ENCODE measurements at regions of chr6 and their contacts with region 1.

Region 1: DNA sequence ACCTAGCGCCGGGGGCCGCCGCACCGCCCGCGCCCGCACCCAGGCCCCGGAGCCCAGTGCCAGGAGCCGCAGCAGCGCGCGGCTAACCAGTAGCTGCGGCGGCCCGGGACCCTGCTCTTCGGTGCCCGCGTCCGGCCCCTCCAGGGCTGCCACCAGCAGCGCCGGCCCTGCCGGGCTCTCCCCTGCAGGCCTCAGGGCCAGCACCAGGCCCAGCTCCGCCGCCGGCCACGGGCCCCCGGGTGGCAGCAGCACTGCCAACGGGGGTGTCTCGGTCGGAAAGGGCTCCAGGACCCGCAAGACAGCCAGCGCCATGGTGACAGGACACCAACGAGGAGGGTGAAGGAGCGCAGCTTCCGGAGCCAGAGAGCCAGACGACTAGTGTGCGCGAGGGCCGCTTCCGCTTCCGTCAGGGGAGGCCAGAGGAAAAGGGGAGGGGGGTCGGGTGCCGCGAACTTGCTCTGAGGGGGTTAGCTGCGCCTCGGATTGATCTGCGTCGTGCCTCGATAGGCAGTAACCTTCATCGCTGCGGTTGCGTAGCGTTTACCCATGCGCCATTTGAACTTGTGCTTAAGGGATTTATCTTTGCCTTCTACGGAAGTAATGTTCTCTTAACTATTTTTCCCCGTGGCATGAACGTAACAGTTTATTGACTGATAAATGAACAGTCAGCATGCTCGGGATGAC is at the start of gene PEX6:
- DNase-seq: peak; percentile 87 to 98 (median 92)
- H3K4me3 ChIP-seq: peak within 1 kb of the TSS; percentile 70 to 75
- H3K4me3 Mint-ChIP-seq: peak within 1 kb of the TSS; percentile 92 to 99 (median 96)
- H3K27ac ChIP-seq: peak within 1 kb of the TSS; percentile 77
- H3K27ac Mint-ChIP-seq: peak within 1 kb of the TSS; percentile 93 to 99 (median 98)
- H3K4me1 ChIP-seq: peaks cover 56% of the 10 kb centered on the region
- H3K4me1 Mint-ChIP-seq: peaks cover 30 to 63% (median 43%) of the 10 kb centered on the region in 4 donors
- H3K27me3 ChIP-seq: no peaks in the 10 kb centered on the region
- H3K27me3 Mint-ChIP-seq: no peaks in the 10 kb centered on the region
- total RNA-seq, gene PEX6: 38.9 to 40.5 TPM

Region 2: DNA sequence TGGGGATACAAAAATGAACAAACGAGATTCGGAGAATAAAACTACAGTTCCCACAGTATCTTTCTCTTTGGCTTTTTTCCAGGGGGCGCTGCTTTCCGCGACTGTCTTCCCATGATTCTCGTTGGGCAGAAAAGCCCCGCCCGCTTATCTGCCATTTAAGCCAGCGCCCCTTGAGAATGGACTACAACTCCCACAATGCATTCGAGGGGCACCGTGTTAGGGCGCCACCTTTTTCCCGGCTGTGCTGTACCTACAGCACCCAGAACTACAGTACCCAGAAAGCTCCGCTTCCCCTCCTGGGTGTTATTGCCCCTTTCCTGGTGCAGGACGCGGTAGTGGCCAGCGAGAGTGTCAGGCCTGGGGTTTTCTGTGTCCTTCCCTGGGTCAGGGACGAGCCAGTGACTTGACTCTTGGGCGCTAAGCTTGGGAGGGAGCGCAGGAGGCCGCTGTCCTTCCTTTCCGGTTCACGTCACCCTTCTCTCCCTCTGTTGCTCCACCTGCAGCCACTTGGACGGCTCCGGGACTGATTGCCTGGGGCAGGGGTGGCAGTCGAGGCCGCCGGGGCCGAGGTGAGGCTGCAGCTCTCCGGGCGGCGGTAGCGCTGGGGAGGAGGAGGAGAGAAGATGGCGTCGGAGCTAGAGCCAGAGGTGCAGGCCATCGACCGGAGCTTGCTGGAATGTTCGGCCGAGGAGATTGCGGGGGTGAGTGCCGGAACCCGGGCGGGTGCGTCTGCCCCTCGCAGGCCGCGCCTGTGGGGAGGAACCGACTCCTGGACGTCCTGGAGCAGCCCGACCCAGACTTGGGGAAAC is 415.1 kb before region 1 on chr6 and contains the start of gene UBR2:
- CTCF ChIA-PET with region 1: no interaction called
- POLR2A ChIA-PET with region 1: interaction called, 13 read pairs
- intact Hi-C with region 1: no loop called
- DNase-seq: peak; percentile 92 to 98 (median 95)
- H3K4me3 ChIP-seq: peak within 1 kb of the TSS; percentile 98 to 100
- H3K4me3 Mint-ChIP-seq: peak within 1 kb of the TSS; percentile 92 to 100 (median 98)
- H3K27ac ChIP-seq: peak within 1 kb of the TSS; percentile 94
- H3K27ac Mint-ChIP-seq: peak within 1 kb of the TSS; percentile 90 to 98 (median 96)
- H3K4me1 ChIP-seq: peaks cover 33% of the 10 kb centered on the region
- H3K4me1 Mint-ChIP-seq: peaks cover 21 to 43% (median 28%) of the 10 kb centered on the region in 4 donors
- H3K27me3 ChIP-seq: no peaks in the 10 kb centered on the region
- H3K27me3 Mint-ChIP-seq: peaks cover 0 to 1% of the 10 kb centered on the region in 2 donors
- total RNA-seq, gene UBR2: 55.0 to 55.7 TPM

Region 3: GRCh38 chr6:42989923-42990322 is 10.9 kb after region 1 on chr6:
- CTCF ChIA-PET with region 1: interaction called, 3 read pairs
- POLR2A ChIA-PET with region 1: interaction called, 18 read pairs
- intact Hi-C with region 1: no loop called
- DNase-seq: no peak
- H3K4me3 ChIP-seq: no peak overlapping the region
- H3K4me3 Mint-ChIP-seq: no peak overlapping the region
- H3K27ac ChIP-seq: no peak overlapping the region
- H3K27ac Mint-ChIP-seq: peak overlapping the region in 3 of 7 donors; percentile 17 to 27 (median 23)
- H3K4me1 ChIP-seq: peaks cover 38% of the 10 kb centered on the region
- H3K4me1 Mint-ChIP-seq: peaks cover 41 to 65% (median 50%) of the 10 kb centered on the region in 4 donors
- H3K27me3 ChIP-seq: no peaks in the 10 kb centered on the region
- H3K27me3 Mint-ChIP-seq: no peaks in the 10 kb centered on the region

Region 4: GRCh38 chr6:43021270-43022047 is 42.5 kb after region 1 on chr6 and contains the start of gene RRP36:
- CTCF ChIA-PET with region 1: no interaction called
- POLR2A ChIA-PET with region 1: interaction called, 73 read pairs
- intact Hi-C with region 1: no loop called
- DNase-seq: peak; percentile 47 to 72 (median 50)
- H3K4me3 ChIP-seq: peak within 1 kb of the TSS; percentile 84
- H3K4me3 Mint-ChIP-seq: peak within 1 kb of the TSS; percentile 94 to 100 (median 98)
- H3K27ac ChIP-seq: peak within 1 kb of the TSS; percentile 68
- H3K27ac Mint-ChIP-seq: peak within 1 kb of the TSS; percentile 79 to 98 (median 95)
- H3K4me1 ChIP-seq: peaks cover 41% of the 10 kb centered on the region
- H3K4me1 Mint-ChIP-seq: peaks cover 14 to 58% (median 31%) of the 10 kb centered on the region in 4 donors
- H3K27me3 ChIP-seq: no peaks in the 10 kb centered on the region
- H3K27me3 Mint-ChIP-seq: no peaks in the 10 kb centered on the region
- total RNA-seq, gene RRP36: 56.5 to 58.7 TPM

Region 5: DNA sequence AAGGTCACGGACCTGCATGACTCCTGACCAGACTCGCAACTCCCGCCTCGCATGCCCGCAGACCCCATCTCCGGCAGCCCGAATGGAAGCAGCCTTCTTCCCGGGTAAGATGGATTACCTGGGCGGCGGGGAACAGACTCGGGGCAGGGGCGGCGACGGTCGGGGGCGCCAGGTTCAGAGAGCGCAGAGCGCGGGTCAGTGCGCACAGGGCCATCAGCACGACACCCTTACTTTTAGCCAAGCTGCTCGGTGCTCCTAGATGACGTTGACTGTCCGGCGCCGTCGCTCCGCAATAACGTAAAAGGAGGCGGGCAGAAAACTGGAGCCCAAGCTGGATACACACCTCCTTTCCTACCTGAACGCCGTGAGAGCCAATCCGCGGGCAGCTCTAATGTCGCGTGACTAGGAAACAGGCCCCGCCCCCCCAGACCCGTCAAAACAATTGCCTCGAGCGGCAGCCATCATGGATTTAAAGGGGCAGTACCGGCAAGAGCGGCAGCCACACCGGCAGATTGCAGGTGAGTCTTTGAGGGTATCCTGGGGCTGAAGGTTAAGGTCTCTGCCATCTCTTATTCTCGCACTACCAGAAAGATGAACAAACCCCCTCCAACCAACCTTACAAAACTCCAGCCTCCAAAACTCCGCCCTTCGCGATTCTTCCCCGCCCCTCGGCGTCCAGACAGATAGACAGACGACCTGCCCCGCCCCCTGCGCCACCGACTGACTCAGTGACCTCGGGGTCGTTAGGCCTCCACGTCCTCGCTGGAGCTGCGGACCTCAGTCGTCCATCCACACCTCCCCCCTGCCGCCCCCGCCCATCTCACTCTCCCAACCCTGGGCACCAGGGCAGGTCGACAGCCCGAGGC is 80.4 kb after region 1 on chr6 and contains the starts of genes KLC4 and MRPL2:
- CTCF ChIA-PET with region 1: interaction called, 3 read pairs
- POLR2A ChIA-PET with region 1: interaction called, 37 read pairs
- intact Hi-C with region 1: loop called (anchors 1 kb)
- DNase-seq: peak; percentile 95 to 99 (median 96)
- H3K4me3 ChIP-seq: peak within 1 kb of the TSS; percentile 84 to 87
- H3K4me3 Mint-ChIP-seq: peak within 1 kb of the TSS; percentile 94 to 99 (median 97)
- H3K27ac ChIP-seq: peak within 1 kb of the TSS; percentile 91
- H3K27ac Mint-ChIP-seq: peak within 1 kb of the TSS; percentile 97 to 100 (median 99)
- H3K4me1 ChIP-seq: peaks cover 24% of the 10 kb centered on the region
- H3K4me1 Mint-ChIP-seq: peaks cover 27 to 52% (median 35%) of the 10 kb centered on the region in 4 donors
- H3K27me3 ChIP-seq: no peaks in the 10 kb centered on the region
- H3K27me3 Mint-ChIP-seq: no peaks in the 10 kb centered on the region
- total RNA-seq, gene KLC4: 51.6 to 57.0 TPM
- total RNA-seq, gene MRPL2: 55.3 to 56.5 TPM

Region 6: DNA sequence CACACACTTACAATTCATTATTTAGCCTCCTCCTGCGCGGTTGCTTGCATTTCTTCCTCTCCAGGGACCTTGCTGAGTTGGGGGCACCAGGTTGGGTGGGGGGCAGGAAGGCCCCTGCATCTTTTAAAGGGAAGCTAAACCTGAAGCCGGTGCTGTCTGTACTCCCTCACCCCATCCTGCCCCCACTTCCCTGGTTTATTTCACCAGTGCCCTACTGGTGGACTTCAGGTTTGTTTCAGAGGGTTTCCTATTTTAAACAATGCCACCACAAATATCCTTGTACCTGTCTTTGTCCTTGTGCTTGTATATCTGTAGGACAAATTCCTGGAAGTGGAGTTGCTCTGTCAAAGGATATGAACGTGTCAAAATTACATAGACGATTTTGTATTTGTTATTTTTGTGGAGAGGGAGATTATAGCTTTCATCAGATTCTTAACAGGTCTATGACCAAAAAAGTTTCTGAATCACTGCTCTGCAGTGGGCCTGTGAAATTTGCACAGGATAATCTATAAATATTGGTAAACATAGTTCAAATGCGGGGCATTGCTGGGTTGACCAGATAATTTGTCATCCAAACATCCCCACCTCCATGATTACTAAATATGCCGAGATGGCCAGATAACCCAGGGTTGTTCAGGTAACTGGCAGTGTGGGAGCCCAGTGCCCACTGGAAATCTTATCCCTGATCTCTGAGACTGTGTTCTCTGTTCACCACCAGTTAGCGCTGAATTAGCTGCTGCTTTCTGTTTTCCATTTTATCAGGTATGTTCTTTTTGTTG is 118.3 kb after region 1 on chr6:
- CTCF ChIA-PET with region 1: no interaction called
- POLR2A ChIA-PET with region 1: no interaction called
- intact Hi-C with region 1: no loop called
- DNase-seq: no peak
- H3K4me3 ChIP-seq: no peak overlapping the region
- H3K4me3 Mint-ChIP-seq: no peak overlapping the region
- H3K27ac ChIP-seq: no peak overlapping the region
- H3K27ac Mint-ChIP-seq: no peak overlapping the region
- H3K4me1 ChIP-seq: peaks cover 15% of the 10 kb centered on the region
- H3K4me1 Mint-ChIP-seq: peaks cover 12 to 22% (median 15%) of the 10 kb centered on the region in 4 donors
- H3K27me3 ChIP-seq: no peaks in the 10 kb centered on the region
- H3K27me3 Mint-ChIP-seq: no peaks in the 10 kb centered on the region

Region 7: GRCh38 chr6:43120944-43121913 is 142.2 kb after region 1 on chr6:
- CTCF ChIA-PET with region 1: no interaction called
- POLR2A ChIA-PET with region 1: no interaction called
- intact Hi-C with region 1: no loop called
- DNase-seq: no peak
- H3K4me3 ChIP-seq: no peak overlapping the region
- H3K4me3 Mint-ChIP-seq: no peak overlapping the region
- H3K27ac ChIP-seq: no peak overlapping the region
- H3K27ac Mint-ChIP-seq: no peak overlapping the region
- H3K4me1 ChIP-seq: no peaks in the 10 kb centered on the region
- H3K4me1 Mint-ChIP-seq: peaks cover 0 to 3% (median 0%) of the 10 kb centered on the region in 4 donors
- H3K27me3 ChIP-seq: no peaks in the 10 kb centered on the region
- H3K27me3 Mint-ChIP-seq: no peaks in the 10 kb centered on the region

Region 8: GRCh38 chr6:44542401-44543116 is 1563.6 kb after region 1 on chr6:
- CTCF ChIA-PET with region 1: no interaction called
- POLR2A ChIA-PET with region 1: no interaction called
- intact Hi-C with region 1: no loop called
- DNase-seq: no peak
- H3K4me3 ChIP-seq: no peak overlapping the region
- H3K4me3 Mint-ChIP-seq: no peak overlapping the region
- H3K27ac ChIP-seq: no peak overlapping the region
- H3K27ac Mint-ChIP-seq: no peak overlapping the region
- H3K4me1 ChIP-seq: no peaks in the 10 kb centered on the region
- H3K4me1 Mint-ChIP-seq: no peaks in the 10 kb centered on the region
- H3K27me3 ChIP-seq: no peaks in the 10 kb centered on the region
- H3K27me3 Mint-ChIP-seq: peaks cover 0 to 6% of the 10 kb centered on the region in 2 donors

Measured in CD4-positive, alpha-beta memory T cell (primary cell).